Activated naive CD4-positive, alpha-beta T cell treated with anti-CD3 and anti-CD28 coated beads for 36 hours (primary cell): ENCODE measurements at regions of chr1 and their contacts with region 1.

Region 1: DNA sequence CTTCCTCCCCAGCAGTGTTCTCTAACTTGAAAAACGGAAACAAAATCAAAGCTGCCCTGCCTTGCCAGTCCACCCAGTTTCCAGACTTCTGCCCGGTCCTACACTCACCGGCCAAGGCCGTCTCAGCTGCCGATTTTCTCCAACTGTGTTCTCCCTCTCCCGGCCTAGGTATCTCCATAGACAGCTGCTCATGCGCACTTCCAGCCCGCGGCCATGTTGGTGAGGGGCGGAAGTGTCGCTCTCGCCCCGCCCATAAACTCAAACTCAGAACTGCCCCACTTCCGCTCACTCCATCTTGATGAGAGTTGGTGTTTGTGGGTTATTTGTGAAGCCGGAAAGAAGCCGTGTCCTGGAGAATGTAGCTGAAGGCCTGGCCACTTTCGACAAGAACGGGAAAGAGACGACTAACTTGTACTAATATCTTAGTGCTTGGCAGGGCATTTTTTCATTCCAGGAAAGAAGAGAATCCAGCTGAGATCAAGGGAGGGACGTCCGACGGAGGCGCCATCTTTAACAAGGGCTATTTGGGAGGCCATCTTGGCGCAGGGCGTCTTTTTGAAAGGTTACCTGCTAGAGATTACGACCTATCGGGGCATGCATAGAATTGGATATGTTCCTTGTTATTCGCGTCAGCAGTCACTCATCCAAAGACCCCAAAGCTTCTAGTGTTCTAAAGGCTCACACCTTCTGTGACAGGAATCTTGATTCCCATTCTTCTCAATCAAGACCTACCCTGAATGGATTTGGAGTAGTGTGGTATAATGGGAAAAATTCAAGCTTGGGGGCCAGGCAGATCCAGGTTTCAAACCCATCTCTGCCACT is at the start of gene USF1:
- DNase-seq: peak; percentile 95
- H3K4me3 Mint-ChIP-seq: peak within 1 kb of the TSS; percentile 88
- H3K27ac Mint-ChIP-seq: peak within 1 kb of the TSS; percentile 99
- H3K4me1 Mint-ChIP-seq: peaks cover 32% of the 10 kb centered on the region
- H3K27me3 Mint-ChIP-seq: no peaks in the 10 kb centered on the region
- total RNA-seq, gene USF1: 43.7 to 44.2 TPM

Region 2: DNA sequence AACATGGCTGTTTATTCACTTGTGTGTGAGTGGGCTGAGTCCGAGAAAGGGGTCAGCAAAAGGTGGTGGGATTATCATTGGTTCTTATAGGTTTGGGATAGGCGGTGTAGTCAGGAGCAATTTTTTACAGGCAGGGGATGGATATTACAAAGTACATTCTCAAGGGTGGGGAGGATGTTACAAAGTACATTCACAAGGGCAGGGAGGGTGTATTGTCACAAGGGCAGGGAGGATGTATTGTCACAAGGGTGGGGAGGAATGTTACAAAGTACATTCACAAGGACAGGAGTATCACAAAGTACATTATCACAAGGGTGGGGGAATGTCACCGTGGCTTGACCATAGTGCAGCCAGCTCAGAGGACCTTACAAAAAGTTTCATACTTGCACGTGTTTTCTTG is 60.2 kb before region 1 on chr1:
- CTCF ChIA-PET with region 1: no interaction called
- intact Hi-C with region 1: no loop called
- DNase-seq: no peak
- H3K4me3 Mint-ChIP-seq: no peak overlapping the region
- H3K27ac Mint-ChIP-seq: no peak overlapping the region
- H3K4me1 Mint-ChIP-seq: peaks cover 9% of the 10 kb centered on the region
- H3K27me3 Mint-ChIP-seq: peaks cover 20% of the 10 kb centered on the region

Region 3: DNA sequence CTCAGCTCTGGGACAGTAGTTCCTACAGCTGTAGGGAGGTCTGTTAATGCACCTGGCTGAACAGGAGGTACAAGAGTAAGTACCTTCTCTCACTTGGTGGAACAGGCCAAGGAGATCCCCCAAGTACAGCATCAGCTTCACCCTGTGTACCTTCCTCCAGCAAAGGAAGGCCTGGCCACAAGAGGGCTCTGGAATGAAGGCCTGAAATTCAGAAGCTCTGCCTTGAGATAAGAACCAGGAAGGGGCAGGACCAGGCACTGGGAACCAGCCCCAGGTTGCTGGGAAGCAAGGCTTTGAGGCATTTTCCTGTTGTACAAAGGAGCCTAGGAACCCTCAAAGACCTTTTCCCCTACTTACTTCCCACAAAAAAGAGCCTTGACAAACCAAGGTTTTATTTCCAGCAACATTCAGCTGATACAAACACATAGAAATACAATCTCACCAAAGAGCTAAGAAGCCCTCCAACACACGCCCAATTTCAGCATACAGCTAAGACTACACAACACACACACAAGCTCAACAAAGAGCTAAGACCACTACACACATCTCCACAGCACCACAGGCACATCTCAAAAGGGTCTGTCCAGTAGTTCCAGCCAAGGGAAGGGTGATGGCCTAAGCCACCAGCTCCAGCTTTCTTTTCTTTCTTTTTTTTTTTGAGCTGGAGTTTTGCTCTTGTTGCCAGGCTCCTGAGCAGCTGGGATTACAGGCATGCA is 48.5 kb before region 1 on chr1:
- CTCF ChIA-PET with region 1: interaction called, 10 read pairs
- intact Hi-C with region 1: loop called (anchors 1 kb)
- DNase-seq: peak; percentile 77
- H3K4me3 Mint-ChIP-seq: no peak overlapping the region
- H3K27ac Mint-ChIP-seq: peak overlapping the region; percentile 1
- H3K4me1 Mint-ChIP-seq: peaks cover 6% of the 10 kb centered on the region
- H3K27me3 Mint-ChIP-seq: no peaks in the 10 kb centered on the region

Region 4: GRCh38 chr1:161092621-161093028 is 46.7 kb after region 1 on chr1:
- CTCF ChIA-PET with region 1: interaction called, 135 read pairs
- intact Hi-C with region 1: loop called (anchors 1 kb)
- DNase-seq: peak; percentile 80
- H3K4me3 Mint-ChIP-seq: no peak overlapping the region
- H3K27ac Mint-ChIP-seq: no peak overlapping the region
- H3K4me1 Mint-ChIP-seq: peaks cover 61% of the 10 kb centered on the region
- H3K27me3 Mint-ChIP-seq: no peaks in the 10 kb centered on the region

Region 5: GRCh38 chr1:161132410-161133219 is 86.7 kb after region 1 on chr1 and contains the start of gene DEDD:
- CTCF ChIA-PET with region 1: interaction called, 7 read pairs
- intact Hi-C with region 1: loop called (anchors 1 kb)
- DNase-seq: peak; percentile 95
- H3K4me3 Mint-ChIP-seq: no peak within 1 kb of the TSS
- H3K27ac Mint-ChIP-seq: no peak within 1 kb of the TSS
- H3K4me1 Mint-ChIP-seq: peaks cover 44% of the 10 kb centered on the region
- H3K27me3 Mint-ChIP-seq: no peaks in the 10 kb centered on the region
- total RNA-seq, gene DEDD: 29.7 to 34.0 TPM

Region 6: DNA sequence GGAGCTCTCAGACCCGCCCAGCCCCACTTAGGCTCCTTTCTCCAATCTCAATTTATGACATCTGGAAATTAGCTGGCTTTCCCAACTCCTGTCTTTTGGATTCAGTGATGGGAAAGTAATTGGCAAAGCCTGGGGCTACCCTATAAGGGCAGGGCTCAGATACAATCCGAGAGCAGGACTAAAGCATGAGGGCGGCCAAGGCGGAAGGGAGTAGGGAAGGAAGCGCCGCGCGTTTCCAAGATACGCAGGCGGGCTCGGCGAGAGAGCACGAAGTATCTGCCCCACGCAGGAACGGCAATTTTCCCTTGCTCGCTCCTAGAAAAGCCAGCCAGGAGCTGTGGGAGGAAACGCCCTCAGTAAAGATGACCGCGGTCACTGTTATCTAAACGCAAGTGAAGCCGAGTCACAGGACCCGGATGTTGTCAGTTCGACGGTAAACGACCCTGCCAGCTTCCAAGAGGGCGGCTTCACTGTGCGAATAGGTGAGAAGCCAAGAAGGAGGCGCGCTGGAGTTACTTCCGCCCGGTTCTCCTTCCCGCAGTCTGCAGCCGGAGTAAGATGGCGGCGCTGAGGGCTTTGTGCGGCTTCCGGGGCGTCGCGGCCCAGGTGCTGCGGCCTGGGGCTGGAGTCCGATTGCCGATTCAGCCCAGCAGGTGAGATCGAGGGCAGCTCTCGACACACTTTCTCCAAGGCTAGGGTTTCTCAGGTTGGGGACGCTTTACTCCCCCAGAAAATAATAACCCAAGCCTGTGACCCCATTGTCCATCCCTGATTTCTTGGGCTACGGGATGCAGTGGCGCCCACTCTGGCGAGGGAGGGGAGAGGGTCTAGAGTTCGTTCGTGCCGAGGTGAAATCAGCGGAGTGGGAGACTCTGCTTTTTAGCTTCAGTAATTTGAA is 156.1 kb after region 1 on chr1 and contains the start of gene NDUFS2:
- CTCF ChIA-PET with region 1: interaction called, 4 read pairs
- intact Hi-C with region 1: loop called (anchors 1 kb)
- DNase-seq: peak; percentile 99
- H3K4me3 Mint-ChIP-seq: peak within 1 kb of the TSS; percentile 92
- H3K27ac Mint-ChIP-seq: peak within 1 kb of the TSS; percentile 89
- H3K4me1 Mint-ChIP-seq: peaks cover 75% of the 10 kb centered on the region
- H3K27me3 Mint-ChIP-seq: no peaks in the 10 kb centered on the region
- total RNA-seq, gene NDUFS2: 126 to 130 TPM